Cardiac septum (tissue), 1 donor: ENCODE measurements at regions of chr10 and their contacts with region 1.

Region 1: DNA sequence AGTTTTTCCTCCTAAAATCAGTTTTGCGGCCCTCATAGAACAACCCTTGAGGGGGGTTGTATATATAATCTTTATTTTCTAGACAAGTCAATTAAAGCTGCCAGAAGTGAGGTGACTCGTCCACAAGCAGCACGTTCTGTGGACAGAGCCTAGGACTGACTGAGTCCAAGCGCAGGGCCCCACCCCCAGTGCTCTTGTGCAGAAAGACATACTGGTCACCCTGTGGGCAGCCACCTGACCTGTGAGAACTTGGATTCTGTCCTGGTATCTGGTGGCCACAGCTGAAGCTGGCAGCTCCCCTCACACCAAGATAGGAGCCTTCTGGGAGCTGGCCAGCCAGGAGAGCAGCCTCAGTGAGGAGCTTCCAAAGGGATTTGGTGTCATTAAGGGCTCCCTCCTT is 89.3 kb downstream of the GRK5 start:
- DNase-seq: peak; percentile 85

Region 2: DNA sequence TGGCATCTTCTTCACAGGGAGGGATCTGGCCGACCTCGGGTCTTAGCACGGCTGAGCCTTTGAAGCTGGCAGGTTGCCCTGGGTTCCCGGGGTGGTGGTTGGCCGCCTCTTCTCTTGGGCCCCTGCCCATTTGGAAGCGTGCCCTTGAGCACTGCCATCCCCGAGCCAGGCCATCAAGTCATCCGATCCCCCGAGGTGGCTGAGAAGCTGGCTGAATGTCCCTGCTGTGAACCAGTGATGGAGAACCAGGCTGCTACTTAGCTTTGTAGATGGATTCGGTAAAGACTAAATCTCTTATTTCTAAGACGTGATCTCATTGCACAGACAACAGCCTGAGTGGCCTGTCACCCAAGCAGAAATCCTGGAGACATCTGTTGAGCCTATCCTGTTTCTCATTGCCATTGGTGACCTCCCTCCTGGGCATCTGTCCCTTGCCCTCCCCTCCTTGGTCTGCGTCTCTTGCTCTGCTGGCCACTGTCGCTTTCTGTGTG is 15.1 kb before region 1 on chr10:
- intact Hi-C with region 1: loop called (anchors 2 kb)
- DNase-seq: no peak